ENCODE measurements at regions of chr14 and their contacts with region 1.

Region 1: DNA sequence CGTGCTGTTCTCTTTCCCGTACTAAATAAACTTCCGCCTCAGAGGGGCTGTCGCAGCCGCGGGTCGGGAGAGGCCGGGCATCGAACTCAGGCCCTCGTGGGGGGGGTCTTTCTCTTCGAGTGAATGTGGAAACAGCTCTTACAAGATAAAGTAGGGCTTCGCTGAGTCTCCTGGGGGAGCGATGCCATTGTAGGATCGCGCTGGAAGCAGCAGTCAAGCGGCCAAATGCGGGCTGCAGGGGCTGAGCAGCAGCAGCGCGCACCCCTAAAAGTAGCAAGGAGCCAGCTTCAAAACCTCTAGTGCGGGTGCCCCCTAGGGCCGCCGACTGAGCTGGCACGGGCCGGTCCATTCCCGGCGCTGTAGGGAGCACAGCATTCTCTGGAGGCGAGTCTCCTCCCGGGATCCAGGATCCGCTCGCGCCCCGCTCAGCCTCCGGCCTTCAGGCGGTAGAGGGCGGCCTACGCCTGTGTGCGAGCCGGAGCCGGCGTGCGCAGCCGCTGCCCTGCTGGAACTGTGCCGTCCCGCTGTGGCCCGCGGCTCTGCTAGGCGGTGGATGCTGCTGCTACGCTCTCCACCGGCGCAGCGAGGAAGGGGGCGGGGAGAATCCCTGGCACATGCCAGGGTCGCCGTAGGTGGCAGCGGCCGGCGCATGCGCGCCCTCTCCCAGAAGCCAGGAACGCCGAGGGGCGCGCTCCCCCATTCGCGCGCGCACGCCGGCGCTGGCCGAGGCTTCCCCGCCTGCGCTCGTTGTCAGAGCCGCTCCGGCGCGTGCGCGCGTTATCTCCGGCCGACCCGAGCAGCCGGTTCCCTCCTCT is at the start of gene FUT8:
- DNase-seq: peak; percentile 96
- H3K4me3 ChIP-seq: peak within 1 kb of the TSS; percentile 69 to 98 (median 97)
- H3K27ac ChIP-seq: peak within 1 kb of the TSS; percentile 81
- H3K4me1 ChIP-seq: peaks cover 16% of the 10 kb centered on the region
- H3K27me3 ChIP-seq: no peaks in the 10 kb centered on the region
- CTCF ChIP-seq: peak; percentile 46 to 88
- total RNA-seq, gene FUT8: 14.4 to 22.0 TPM

Region 2: GRCh38 chr14:65170768-65171507 is 241.3 kb before region 1 on chr14:
- CTCF ChIA-PET with region 1: interaction called, 3 read pairs
- dilution Hi-C with region 1: no loop called
- in situ Hi-C with region 1: loop called in 1 of 2 experiments (anchors 5 kb)
- intact Hi-C with region 1: no loop called
- DNase-seq: peak; percentile 76
- H3K4me3 ChIP-seq: no peak overlapping the region
- H3K27ac ChIP-seq: no peak overlapping the region
- H3K4me1 ChIP-seq: peaks cover 6% of the 10 kb centered on the region
- H3K27me3 ChIP-seq: no peaks in the 10 kb centered on the region
- CTCF ChIP-seq: peak in 1 of 2 donors; percentile 16

Region 3: DNA sequence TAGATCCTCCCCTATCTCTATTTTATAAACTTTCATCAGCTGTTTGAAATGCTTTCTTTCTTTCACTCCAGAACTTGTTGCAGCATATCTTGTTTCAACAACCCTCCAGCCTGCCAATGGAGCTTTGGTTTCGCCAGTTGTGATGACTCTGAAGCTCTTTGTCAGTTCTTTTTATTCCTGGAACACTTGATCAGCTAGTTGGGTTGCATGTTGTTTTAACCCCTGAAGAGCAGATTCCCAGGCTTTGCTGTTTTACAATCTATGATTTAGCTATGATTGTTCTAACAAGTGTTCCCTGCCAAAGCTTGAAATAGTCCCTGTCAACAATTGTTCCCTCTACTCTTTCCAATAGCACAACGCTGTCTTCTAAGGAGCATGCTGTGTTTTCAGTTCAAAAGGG is 50.3 kb before region 1 on chr14:
- CTCF ChIA-PET with region 1: no interaction called
- dilution Hi-C with region 1: loop called (anchors 5 kb)
- in situ Hi-C with region 1: no loop called
- intact Hi-C with region 1: no loop called
- DNase-seq: peak; percentile 81
- H3K4me3 ChIP-seq: no peak overlapping the region
- H3K27ac ChIP-seq: no peak overlapping the region
- H3K4me1 ChIP-seq: peaks cover 24% of the 10 kb centered on the region
- H3K27me3 ChIP-seq: no peaks in the 10 kb centered on the region
- CTCF ChIP-seq: no peak

Region 4: GRCh38 chr14:65396082-65396910 is 15.9 kb before region 1 on chr14:
- CTCF ChIA-PET with region 1: no interaction called
- dilution Hi-C with region 1: no loop called
- in situ Hi-C with region 1: no loop called
- intact Hi-C with region 1: no loop called
- DNase-seq: no peak
- H3K4me3 ChIP-seq: no peak overlapping the region
- H3K27ac ChIP-seq: no peak overlapping the region
- H3K4me1 ChIP-seq: no peaks in the 10 kb centered on the region
- H3K27me3 ChIP-seq: no peaks in the 10 kb centered on the region
- CTCF ChIP-seq: no peak

Region 5: GRCh38 chr14:65604936-65605335 is 192.7 kb after region 1 on chr14:
- CTCF ChIA-PET with region 1: no interaction called
- dilution Hi-C with region 1: no loop called
- in situ Hi-C with region 1: no loop called
- intact Hi-C with region 1: loop called (anchors 1 kb)
- DNase-seq: no peak
- H3K4me3 ChIP-seq: no peak overlapping the region
- H3K27ac ChIP-seq: no peak overlapping the region
- H3K4me1 ChIP-seq: no peaks in the 10 kb centered on the region
- H3K27me3 ChIP-seq: no peaks in the 10 kb centered on the region
- CTCF ChIP-seq: peak; percentile 11 to 35

Region 6: GRCh38 chr14:65958664-65959562 is 546.7 kb after region 1 on chr14:
- CTCF ChIA-PET with region 1: interaction called, 4 read pairs
- dilution Hi-C with region 1: no loop called
- in situ Hi-C with region 1: loop called in 1 of 2 experiments (anchors 25 kb)
- intact Hi-C with region 1: loop called (anchors 1 kb)
- DNase-seq: no peak
- H3K4me3 ChIP-seq: no peak overlapping the region
- H3K27ac ChIP-seq: no peak overlapping the region
- H3K4me1 ChIP-seq: no peaks in the 10 kb centered on the region
- H3K27me3 ChIP-seq: no peaks in the 10 kb centered on the region
- CTCF ChIP-seq: peak; percentile 27 to 54

Measured in mammary epithelial cell (primary cell).